Activated CD4-positive, alpha-beta T cell treated with anti-CD3 and anti-CD28 coated beads for 36 hours (primary cell): ENCODE measurements at regions of chr1 and their contacts with region 1.

Region 1: GRCh38 chr1:184183919-184184318 is 132.4 kb downstream of the TSEN15 start:
- DNase-seq: no peak
- ATAC-seq: no peak
- H3K4me3 Mint-ChIP-seq: no peak overlapping the region
- H3K27ac Mint-ChIP-seq: no peak overlapping the region
- H3K4me1 Mint-ChIP-seq: no peaks in the 10 kb centered on the region
- H3K27me3 Mint-ChIP-seq: peaks cover 1% of the 10 kb centered on the region

Region 2: GRCh38 chr1:184170719-184171118 is 13.2 kb before region 1 on chr1:
- CTCF ChIA-PET with region 1: no interaction called
- POLR2A ChIA-PET with region 1: no interaction called
- intact Hi-C with region 1: loop called in 1 of 2 experiments (anchors 1 kb)
- DNase-seq: no peak
- ATAC-seq: no peak
- H3K4me3 Mint-ChIP-seq: no peak overlapping the region
- H3K27ac Mint-ChIP-seq: no peak overlapping the region
- H3K4me1 Mint-ChIP-seq: no peaks in the 10 kb centered on the region
- H3K27me3 Mint-ChIP-seq: no peaks in the 10 kb centered on the region